ENCODE measurements at regions of chr2 and their contacts with region 1.

Region 1: GRCh38 chr2:84970868-84971509 is at the start of gene KCMF1:
- DNase-seq: peak; percentile 67
- H3K4me3 Mint-ChIP-seq: peak within 1 kb of the TSS; percentile 100
- H3K27ac Mint-ChIP-seq: peak within 1 kb of the TSS; percentile 100
- H3K4me1 Mint-ChIP-seq: peaks cover 43% of the 10 kb centered on the region
- H3K27me3 Mint-ChIP-seq: no peaks in the 10 kb centered on the region
- total RNA-seq, gene KCMF1: 98.1 and 108 TPM in 2 replicates

Region 2: DNA sequence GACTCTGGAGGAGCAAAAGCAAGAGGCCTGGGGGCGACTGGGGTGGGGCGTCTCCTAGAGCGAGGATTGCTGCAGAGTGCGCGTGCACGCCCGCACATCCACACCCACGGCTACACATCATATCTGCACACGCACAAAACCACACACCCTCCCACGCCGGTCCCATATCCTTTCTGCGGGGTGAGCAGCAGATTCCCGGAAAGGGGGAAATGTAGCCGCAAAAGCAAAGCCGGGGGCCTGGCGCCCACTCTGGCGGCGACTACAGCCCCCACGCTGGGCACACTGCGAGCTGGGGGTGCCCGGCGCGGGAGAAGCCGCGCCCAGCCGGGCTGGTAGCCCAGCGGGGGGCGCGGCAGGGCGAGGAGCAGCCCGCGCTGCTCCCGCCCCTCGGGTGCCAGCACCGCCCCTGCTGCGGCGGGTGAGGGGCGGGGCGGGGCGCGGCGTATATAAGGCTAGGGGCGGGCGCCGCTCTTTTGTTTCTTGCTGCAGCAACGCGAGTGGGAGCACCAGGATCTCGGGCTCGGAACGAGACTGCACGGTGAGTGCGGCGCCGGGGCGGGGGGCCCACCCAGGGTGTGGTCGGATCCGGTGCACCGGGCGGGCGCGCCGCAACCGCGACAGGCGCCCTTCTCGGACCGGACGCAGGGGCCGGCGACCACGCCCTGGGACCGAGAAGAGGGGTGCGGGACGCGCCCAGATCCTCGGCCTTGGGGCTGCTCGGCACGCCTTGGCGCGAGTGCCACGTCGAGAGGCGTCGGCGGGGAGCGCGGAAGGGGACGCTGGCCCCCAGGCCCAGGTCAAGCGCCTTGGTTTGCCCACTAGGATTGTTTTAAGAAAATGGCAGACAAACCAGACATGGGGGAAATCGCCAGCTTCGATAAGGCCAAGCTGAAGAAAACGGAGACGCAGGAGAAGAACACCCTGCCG is 65.5 kb before region 1 on chr2 and contains the start of gene TMSB10:
- intact Hi-C with region 1: loop called (anchors 1 kb)
- DNase-seq: peak; percentile 88
- H3K4me3 Mint-ChIP-seq: peak within 1 kb of the TSS; percentile 97
- H3K27ac Mint-ChIP-seq: peak within 1 kb of the TSS; percentile 95
- H3K4me1 Mint-ChIP-seq: peaks cover 78% of the 10 kb centered on the region
- H3K27me3 Mint-ChIP-seq: no peaks in the 10 kb centered on the region
- total RNA-seq, gene TMSB10: 2,415 and 2,510 TPM in 2 replicates

Region 3: DNA sequence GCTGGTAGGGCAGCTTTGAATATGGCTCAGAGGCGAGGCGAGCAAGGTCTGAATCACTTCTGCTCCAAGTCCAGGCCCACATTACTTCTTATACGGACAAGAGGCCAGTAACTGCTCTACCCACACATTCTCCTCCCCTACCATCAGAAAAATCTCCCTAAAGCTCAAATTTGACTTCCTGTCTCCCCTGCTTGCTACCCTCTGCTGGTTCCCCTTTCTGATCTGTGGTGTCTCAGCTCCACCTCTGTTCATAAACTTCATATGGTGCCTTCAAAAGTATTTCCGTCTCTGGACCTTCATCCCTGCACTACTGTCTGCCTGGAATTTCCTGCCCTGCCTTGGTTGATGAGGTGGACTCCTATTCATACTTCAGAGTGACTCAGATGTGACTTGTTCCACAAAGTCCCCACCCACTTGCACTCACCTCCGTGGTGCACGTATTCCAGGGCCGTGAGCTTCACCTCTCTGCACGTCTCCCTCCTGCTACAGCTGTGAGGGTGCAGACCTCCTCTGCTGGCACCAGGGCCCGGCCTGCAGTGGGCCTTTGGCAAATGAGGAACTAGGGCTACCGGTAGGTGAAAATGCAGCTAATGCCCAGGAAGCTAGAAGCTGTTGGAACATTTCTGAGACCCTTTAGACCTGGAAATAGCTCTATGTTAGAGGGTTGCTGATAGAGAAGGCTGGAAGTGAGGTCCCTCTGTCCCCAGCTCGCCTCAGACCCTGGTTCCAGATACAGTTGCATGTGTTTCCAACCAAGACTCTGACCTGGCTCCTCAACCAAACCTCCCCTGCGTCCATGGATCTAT is 24.6 kb before region 1 on chr2:
- intact Hi-C with region 1: loop called (anchors 1 kb)
- DNase-seq: peak; percentile 63
- H3K4me3 Mint-ChIP-seq: peak overlapping the region; percentile 43
- H3K27ac Mint-ChIP-seq: peak overlapping the region; percentile 91
- H3K4me1 Mint-ChIP-seq: peaks cover 40% of the 10 kb centered on the region
- H3K27me3 Mint-ChIP-seq: no peaks in the 10 kb centered on the region

Region 4: GRCh38 chr2:85017411-85018048 is 46.5 kb after region 1 on chr2:
- intact Hi-C with region 1: loop called (anchors 1 kb)
- DNase-seq: no peak
- H3K4me3 Mint-ChIP-seq: no peak overlapping the region
- H3K27ac Mint-ChIP-seq: peak overlapping the region; percentile 40
- H3K4me1 Mint-ChIP-seq: peaks cover 50% of the 10 kb centered on the region
- H3K27me3 Mint-ChIP-seq: no peaks in the 10 kb centered on the region

Measured in activated T-helper 1 cell treated with anti-CD3 and anti-CD28 coated beads, Interleukin-12 subunit alpha, Interleukin-12 subunit beta, Interleukin-2, Interleukin-4 antibody, amounts not matched to agents 30 ng/mL and 10 ng/mL and 1 ng/mL, durations not matched to agents 14 hours and 24 hours and 36 hours (primary cell).